Activated CD4-positive, alpha-beta T cell treated with anti-CD3 and anti-CD28 coated beads for 36 hours (primary cell): ENCODE measurements at regions of chr15 and their contacts with region 1.

Region 1: DNA sequence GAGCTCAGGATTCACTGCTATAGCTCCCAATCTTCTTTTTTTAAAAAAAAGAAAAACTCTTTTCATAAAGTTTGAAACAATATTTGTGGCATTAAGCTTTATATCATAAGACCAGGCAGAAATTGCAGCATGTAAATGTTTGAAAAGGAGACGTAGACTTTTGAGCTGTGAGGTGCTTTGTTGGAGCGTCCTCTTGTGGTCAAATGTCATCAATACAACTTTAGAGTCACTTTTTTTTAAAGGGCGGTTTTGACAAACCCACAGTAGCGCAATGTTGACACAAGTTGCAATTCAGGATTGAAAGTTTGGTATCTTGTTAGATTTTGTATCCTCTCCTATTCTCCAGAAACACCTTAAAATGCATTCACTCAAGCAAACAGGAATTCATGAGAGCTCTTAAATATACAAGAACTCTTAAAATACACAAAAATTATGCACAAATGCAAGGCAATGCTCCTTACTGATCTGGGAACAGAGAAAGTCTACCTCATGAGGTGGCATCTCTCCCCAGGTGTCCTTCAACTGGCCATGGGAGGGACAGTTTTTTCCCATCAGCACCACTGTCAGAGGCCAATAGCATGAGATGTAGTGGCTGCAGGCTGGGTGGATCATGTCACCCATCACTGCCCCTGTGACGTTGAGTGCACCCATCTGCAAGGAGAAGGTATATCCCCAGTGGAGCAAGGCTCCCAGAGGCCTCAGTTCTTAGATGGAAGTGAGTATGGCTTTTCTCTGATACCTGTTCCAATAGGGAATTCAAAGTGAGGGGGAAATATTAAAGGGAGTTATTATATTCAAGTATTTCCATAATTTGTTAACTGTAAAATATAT is 70.7 kb downstream of the ANXA2 start:
- DNase-seq: peak; percentile 52
- ATAC-seq: no peak
- H3K4me3 Mint-ChIP-seq: no peak overlapping the region
- H3K27ac Mint-ChIP-seq: no peak overlapping the region
- H3K4me1 Mint-ChIP-seq: peaks cover 2% of the 10 kb centered on the region
- H3K27me3 Mint-ChIP-seq: peaks cover 31% of the 10 kb centered on the region

Region 2: GRCh38 chr15:59725172-59725486 is 601.9 kb before region 1 on chr15:
- CTCF ChIA-PET with region 1: interaction called, 44 read pairs
- POLR2A ChIA-PET with region 1: no interaction called
- intact Hi-C with region 1: loop called (anchors 1 to 2 kb)
- DNase-seq: no peak
- ATAC-seq: no peak
- H3K4me3 Mint-ChIP-seq: no peak overlapping the region
- H3K27ac Mint-ChIP-seq: no peak overlapping the region
- H3K4me1 Mint-ChIP-seq: no peaks in the 10 kb centered on the region
- H3K27me3 Mint-ChIP-seq: no peaks in the 10 kb centered on the region

Region 3: GRCh38 chr15:59801649-59802048 is 525.4 kb before region 1 on chr15:
- CTCF ChIA-PET with region 1: interaction called, 10 read pairs
- POLR2A ChIA-PET with region 1: no interaction called
- intact Hi-C with region 1: no loop called
- DNase-seq: no peak
- ATAC-seq: no peak
- H3K4me3 Mint-ChIP-seq: no peak overlapping the region
- H3K27ac Mint-ChIP-seq: peak overlapping the region; percentile 14
- H3K4me1 Mint-ChIP-seq: peaks cover 59% of the 10 kb centered on the region
- H3K27me3 Mint-ChIP-seq: no peaks in the 10 kb centered on the region

Region 4: GRCh38 chr15:60272625-60273024 is 54.4 kb before region 1 on chr15:
- CTCF ChIA-PET with region 1: interaction called, 3 read pairs
- POLR2A ChIA-PET with region 1: no interaction called
- intact Hi-C with region 1: loop called in 1 of 2 experiments (anchors 5 kb)
- DNase-seq: no peak
- ATAC-seq: no peak
- H3K4me3 Mint-ChIP-seq: no peak overlapping the region
- H3K27ac Mint-ChIP-seq: no peak overlapping the region
- H3K4me1 Mint-ChIP-seq: no peaks in the 10 kb centered on the region
- H3K27me3 Mint-ChIP-seq: peaks cover 22% of the 10 kb centered on the region

Region 5: GRCh38 chr15:60337076-60337475 is 10.0 kb after region 1 on chr15:
- CTCF ChIA-PET with region 1: interaction called, 19 read pairs
- POLR2A ChIA-PET with region 1: no interaction called
- intact Hi-C with region 1: no loop called
- DNase-seq: no peak
- ATAC-seq: no peak
- H3K4me3 Mint-ChIP-seq: no peak overlapping the region
- H3K27ac Mint-ChIP-seq: no peak overlapping the region
- H3K4me1 Mint-ChIP-seq: no peaks in the 10 kb centered on the region
- H3K27me3 Mint-ChIP-seq: peaks cover 21% of the 10 kb centered on the region

Region 6: DNA sequence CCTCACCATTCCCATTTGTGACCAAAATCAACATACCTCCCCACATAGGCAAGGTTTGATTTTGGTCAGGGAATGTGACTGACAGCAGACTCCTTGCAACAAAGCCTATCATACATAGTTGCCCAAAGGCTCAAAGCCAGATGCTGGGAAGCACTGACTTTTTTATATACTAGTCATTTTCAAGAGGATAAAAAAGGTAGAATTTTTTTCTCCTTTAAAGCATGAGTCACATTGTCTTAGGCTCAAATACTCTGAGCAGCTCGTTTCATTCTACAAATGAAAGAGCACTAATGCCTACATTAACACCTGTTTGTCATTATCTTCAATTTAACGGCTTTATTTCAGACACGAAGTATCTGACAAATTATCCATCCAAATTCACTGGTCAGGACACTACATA is 115.7 kb after region 1 on chr15:
- CTCF ChIA-PET with region 1: no interaction called
- POLR2A ChIA-PET with region 1: no interaction called
- intact Hi-C with region 1: no loop called
- DNase-seq: no peak
- ATAC-seq: no peak
- H3K4me3 Mint-ChIP-seq: no peak overlapping the region
- H3K27ac Mint-ChIP-seq: no peak overlapping the region
- H3K4me1 Mint-ChIP-seq: no peaks in the 10 kb centered on the region
- H3K27me3 Mint-ChIP-seq: no peaks in the 10 kb centered on the region